HepG2 (cell line): ENCODE measurements at regions of chr4 and their contacts with region 1.

Region 1: GRCh38 chr4:74376888-74377483 is 12.0 kb downstream of the EREG start:
- DNase-seq: peak; percentile 45
- ATAC-seq: peak; percentile 60; the same call in 2 of the 3 replicates
- H3K4me3 ChIP-seq: no peak overlapping the region
- H3K27ac ChIP-seq: no peak overlapping the region
- H3K4me1 ChIP-seq: no peaks in the 10 kb centered on the region
- H3K27me3 ChIP-seq: no peaks in the 10 kb centered on the region
- CTCF ChIP-seq: peak; percentile 52
- EP300 ChIP-seq: no peak
- POLR2A ChIP-seq: no peak
- RAD21 ChIP-seq: no peak

Region 2: GRCh38 chr4:74320559-74321118 is 56.3 kb before region 1 on chr4:
- CTCF ChIA-PET with region 1: no interaction called
- POLR2A ChIA-PET with region 1: no interaction called
- in situ Hi-C with region 1: no loop called
- intact Hi-C with region 1: loop called (anchors 2 kb)
- DNase-seq: peak; percentile 58
- ATAC-seq: peak; percentile 81
- H3K4me3 ChIP-seq: no peak overlapping the region
- H3K27ac ChIP-seq: no peak overlapping the region
- H3K4me1 ChIP-seq: no peaks in the 10 kb centered on the region
- H3K27me3 ChIP-seq: no peaks in the 10 kb centered on the region
- CTCF ChIP-seq: peak; percentile 42
- EP300 ChIP-seq: no peak
- POLR2A ChIP-seq: no peak
- RAD21 ChIP-seq: peak; percentile 33; the same call in 1 of the 2 replicates

Region 3: DNA sequence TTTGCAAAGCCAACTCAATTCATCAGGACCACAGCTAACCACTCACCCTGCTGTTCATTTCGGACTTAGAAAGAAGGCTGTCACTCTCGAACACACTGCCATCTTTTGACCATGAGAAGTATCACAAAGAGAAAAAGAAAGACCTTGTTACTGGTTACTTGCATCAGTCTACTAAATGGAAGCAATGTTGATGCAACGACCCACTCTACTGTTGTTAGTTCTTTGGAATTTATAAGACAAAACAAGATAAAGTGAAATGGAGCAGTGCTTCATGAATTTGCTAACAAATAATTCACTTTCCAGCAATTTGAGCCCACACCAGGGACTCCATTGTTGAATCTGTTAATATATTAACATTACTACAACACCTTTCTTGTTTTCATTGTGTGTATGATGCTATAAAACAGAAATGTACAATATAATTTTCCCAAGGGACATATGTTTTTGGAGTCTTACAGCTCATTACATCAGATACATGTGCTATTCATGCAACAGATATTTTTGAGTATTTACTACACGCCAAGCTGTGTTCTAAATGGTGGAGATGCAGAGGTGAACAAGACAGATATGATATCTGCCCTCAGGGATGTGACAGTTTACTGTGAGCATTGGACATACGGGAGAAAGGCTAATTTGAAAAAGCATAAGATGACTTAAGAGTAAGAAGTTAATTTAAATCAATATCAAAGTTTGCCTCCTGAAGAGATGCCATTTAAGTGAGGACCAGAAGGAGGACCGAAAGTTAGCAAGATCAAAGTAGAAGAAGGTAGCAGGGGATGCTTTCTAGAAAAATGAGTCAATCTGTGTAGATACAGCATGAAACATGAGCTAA is 155.2 kb after region 1 on chr4:
- CTCF ChIA-PET with region 1: interaction called, 12 read pairs
- POLR2A ChIA-PET with region 1: no interaction called
- in situ Hi-C with region 1: loop called (anchors 5 kb)
- intact Hi-C with region 1: loop called (anchors 1 kb)
- DNase-seq: peak; percentile 75
- ATAC-seq: peak; percentile 93
- H3K4me3 ChIP-seq: no peak overlapping the region
- H3K27ac ChIP-seq: no peak overlapping the region
- H3K4me1 ChIP-seq: peaks cover 6% of the 10 kb centered on the region; the same call in 1 of the 2 replicates
- H3K27me3 ChIP-seq: no peaks in the 10 kb centered on the region
- CTCF ChIP-seq: peak; percentile 75
- EP300 ChIP-seq: no peak
- POLR2A ChIP-seq: no peak
- RAD21 ChIP-seq: no peak

Region 4: DNA sequence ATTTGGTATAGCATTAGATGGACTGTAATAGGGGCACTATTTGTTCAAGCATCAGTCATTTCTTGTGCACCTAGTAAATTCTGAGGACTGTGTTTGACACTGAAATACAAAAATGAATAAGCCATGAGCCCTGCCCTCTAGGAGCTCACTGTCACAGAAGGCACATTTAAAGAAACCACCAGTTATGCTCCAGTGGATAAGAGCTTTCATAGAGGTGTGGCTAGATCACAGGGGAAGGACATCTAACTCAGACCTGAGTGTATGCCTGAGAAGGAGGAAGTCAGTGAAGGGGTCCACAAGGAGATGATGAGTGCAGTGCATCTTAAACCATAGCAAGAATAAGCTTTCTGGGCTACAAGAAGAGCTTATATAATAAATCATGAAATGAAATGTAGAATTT is 377.2 kb after region 1 on chr4:
- CTCF ChIA-PET with region 1: no interaction called
- POLR2A ChIA-PET with region 1: no interaction called
- in situ Hi-C with region 1: no loop called
- intact Hi-C with region 1: no loop called
- DNase-seq: no peak
- ATAC-seq: no peak
- H3K4me3 ChIP-seq: no peak overlapping the region
- H3K27ac ChIP-seq: no peak overlapping the region
- H3K4me1 ChIP-seq: no peaks in the 10 kb centered on the region
- H3K27me3 ChIP-seq: peaks cover 0 to 8% of the 10 kb centered on the region in 2 experiments; a peak in 2 of 5 replicates
- CTCF ChIP-seq: no peak
- EP300 ChIP-seq: no peak
- POLR2A ChIP-seq: no peak
- RAD21 ChIP-seq: no peak

Region 5: DNA sequence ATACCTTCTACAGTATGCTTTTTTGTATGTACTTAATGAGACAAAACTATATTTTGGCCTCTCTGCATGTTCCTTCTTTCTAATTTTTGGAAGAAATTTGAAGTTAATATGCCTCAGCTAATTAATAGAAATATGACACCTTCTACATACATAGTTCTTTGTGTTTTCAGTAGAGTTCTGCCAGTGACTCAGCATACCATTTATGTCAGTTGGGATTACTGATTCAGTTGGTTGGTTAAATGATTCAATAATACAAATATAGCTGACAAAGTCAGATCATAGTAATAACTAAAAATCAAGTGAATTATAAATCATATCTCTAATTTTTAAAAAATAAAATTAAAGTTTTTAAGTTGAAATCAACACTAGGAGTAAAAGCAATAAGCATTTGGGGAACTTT is 400.5 kb after region 1 on chr4:
- CTCF ChIA-PET with region 1: no interaction called
- POLR2A ChIA-PET with region 1: no interaction called
- in situ Hi-C with region 1: no loop called
- intact Hi-C with region 1: no loop called
- DNase-seq: no peak
- ATAC-seq: no peak
- H3K4me3 ChIP-seq: no peak overlapping the region
- H3K27ac ChIP-seq: no peak overlapping the region
- H3K4me1 ChIP-seq: no peaks in the 10 kb centered on the region
- H3K27me3 ChIP-seq: no peaks in the 10 kb centered on the region
- CTCF ChIP-seq: no peak
- EP300 ChIP-seq: no peak
- POLR2A ChIP-seq: no peak
- RAD21 ChIP-seq: no peak